ENCODE measurements at regions of chr19 and their contacts with region 1.

Region 1: DNA sequence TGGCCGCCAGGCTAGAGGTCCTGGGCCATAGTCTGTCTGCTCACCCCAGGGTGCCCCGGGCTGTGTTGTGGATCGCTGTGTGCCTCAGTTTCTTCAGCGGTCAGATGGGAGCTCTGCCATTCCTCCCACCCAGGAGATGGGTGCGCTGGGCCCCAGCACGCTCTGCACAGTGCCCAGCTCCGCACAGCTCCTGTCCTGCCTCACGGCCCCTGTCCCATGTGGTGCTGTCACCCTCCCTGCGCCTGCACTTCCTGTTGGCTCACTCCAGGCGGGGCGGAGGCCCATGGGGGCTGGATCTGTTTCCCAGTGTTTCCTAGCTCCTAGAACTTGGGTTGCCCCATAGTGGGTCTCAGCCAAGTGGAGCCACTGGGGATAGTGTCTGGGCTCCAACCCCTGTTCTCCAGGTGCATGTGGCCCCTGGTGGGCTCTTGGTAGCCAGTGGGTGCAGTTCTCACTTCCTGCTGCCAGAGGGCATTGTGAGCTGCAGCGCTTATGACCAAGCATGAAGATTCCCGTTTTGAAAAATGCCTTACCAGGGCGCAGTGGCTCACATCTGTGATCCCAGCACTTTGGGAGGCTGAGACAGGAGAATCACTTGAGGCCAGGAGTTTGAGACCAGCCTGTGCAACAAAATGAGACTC is 69.8 kb downstream of the KDM4B start:
- DNase-seq: no peak
- ATAC-seq: peak; percentile 50
- H3K4me3 ChIP-seq: no peak overlapping the region
- H3K27ac ChIP-seq: no peak overlapping the region
- H3K4me1 ChIP-seq: no peaks in the 10 kb centered on the region
- H3K27me3 ChIP-seq: no peaks in the 10 kb centered on the region
- CTCF ChIP-seq: peak; percentile 73

Region 2: GRCh38 chr19:4922530-4923275 is 116.0 kb before region 1 on chr19:
- CTCF ChIA-PET with region 1: interaction called, 13 read pairs
- POLR2A ChIA-PET with region 1: no interaction called
- in situ Hi-C with region 1: no loop called
- intact Hi-C with region 1: no loop called
- DNase-seq: no peak
- ATAC-seq: 0 out of 2 replicates have a peak, but pooled peaks have one; percentile 20
- H3K4me3 ChIP-seq: no peak overlapping the region
- H3K27ac ChIP-seq: no peak overlapping the region
- H3K4me1 ChIP-seq: no peaks in the 10 kb centered on the region
- H3K27me3 ChIP-seq: no peaks in the 10 kb centered on the region
- CTCF ChIP-seq: no peak

Region 3: DNA sequence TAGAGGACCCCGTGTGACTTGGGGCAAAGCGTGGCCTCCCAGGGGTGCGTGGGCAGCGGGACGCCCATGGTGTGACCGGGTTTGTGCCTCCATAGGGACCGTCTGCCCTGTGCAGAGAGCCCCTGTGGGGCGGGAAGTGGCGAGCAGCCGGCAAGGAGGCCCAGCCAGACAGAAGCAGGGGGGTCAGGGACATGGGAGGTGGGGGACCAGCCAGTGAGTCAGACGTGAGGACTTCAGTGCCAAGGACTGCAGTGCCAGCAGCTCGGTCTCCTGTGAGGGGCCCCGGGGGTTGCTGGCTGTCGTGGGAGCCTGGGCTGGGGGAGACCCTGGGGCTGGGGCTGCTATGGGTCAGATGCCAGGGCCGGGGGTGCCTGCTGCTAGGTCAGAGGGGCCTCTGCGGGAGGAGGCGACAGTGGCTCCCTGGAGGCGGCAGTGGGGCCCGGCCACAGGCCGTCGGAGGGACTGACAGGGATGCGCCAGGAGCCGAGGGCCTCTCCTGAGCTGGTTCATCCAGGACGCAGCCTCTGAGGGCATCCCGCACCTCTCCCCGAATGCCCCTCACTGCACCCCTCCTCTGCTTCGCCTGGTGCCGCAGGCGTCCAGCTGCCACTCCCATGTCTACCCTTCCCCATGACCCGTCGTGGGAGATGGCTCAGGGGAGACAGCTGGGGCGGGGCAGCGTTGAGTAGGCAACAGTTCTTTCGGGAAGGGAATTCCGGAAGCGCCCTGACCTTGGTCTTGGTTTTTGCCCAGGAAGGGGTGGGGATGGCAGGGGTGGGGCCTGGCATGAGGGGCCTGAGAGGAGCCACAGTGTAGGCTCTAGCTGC is 10.2 kb after region 1 on chr19:
- CTCF ChIA-PET with region 1: no interaction called
- POLR2A ChIA-PET with region 1: no interaction called
- in situ Hi-C with region 1: no loop called
- intact Hi-C with region 1: no loop called
- DNase-seq: no peak
- ATAC-seq: no peak; the same call in 1 of the 2 replicates
- H3K4me3 ChIP-seq: no peak overlapping the region
- H3K27ac ChIP-seq: 0 out of 2 replicates have a peak overlapping the region, but pooled peaks have one; percentile 34
- H3K4me1 ChIP-seq: peaks cover 18% of the 10 kb centered on the region
- H3K27me3 ChIP-seq: no peaks in the 10 kb centered on the region
- CTCF ChIP-seq: no peak

Measured in Panc1 (cell line).